Panc1 (cell line): ENCODE measurements at regions of chr10 and their contacts with region 1.

Region 1: DNA sequence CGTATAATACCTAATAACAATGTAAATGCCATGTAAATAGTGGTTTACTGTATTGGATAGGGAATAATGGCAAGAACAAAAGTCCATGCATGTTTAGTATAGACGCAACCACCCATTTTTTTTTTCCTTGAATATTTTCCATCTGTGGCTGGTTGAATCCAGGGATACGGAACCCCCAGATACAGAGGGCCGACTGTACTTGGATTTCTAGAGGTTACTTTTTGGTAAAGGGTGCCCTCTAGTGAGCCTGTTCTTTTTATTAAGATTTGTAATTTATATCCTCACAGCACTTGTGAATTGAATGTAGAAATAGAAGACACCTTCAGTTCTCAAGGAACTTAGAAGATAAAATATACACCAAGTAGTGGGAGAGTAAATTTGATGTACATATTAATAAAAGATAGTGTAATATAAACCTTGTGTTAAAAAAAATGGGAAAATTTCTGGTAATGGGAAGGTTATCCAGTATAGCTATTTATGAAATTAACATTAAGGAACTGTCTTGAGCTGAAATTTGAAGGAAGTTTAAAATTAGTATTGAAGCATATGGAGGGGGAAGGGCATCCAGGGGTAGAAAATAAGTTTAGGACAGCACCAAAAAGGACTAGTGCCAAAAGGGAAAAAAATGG is 32.0 kb downstream of the EXOC6 start:
- DNase-seq: no peak
- ATAC-seq: peak; percentile 76
- H3K4me3 ChIP-seq: no peak overlapping the region
- H3K27ac ChIP-seq: no peak overlapping the region
- H3K4me1 ChIP-seq: peaks cover 11% of the 10 kb centered on the region
- H3K27me3 ChIP-seq: no peaks in the 10 kb centered on the region
- CTCF ChIP-seq: peak; percentile 72; the same call in 1 of the 2 replicates

Region 2: GRCh38 chr10:93074147-93074596 is 193.8 kb after region 1 on chr10:
- CTCF ChIA-PET with region 1: no interaction called
- POLR2A ChIA-PET with region 1: no interaction called
- in situ Hi-C with region 1: no loop called
- intact Hi-C with region 1: loop called (anchors 10 kb)
- DNase-seq: no peak
- ATAC-seq: no peak; the same call in 1 of the 2 replicates
- H3K4me3 ChIP-seq: peak overlapping the region; percentile 42 to 62
- H3K27ac ChIP-seq: no peak overlapping the region
- H3K4me1 ChIP-seq: peaks cover 13% of the 10 kb centered on the region
- H3K27me3 ChIP-seq: peaks cover 26% of the 10 kb centered on the region
- CTCF ChIP-seq: peak; percentile 68

Region 3: DNA sequence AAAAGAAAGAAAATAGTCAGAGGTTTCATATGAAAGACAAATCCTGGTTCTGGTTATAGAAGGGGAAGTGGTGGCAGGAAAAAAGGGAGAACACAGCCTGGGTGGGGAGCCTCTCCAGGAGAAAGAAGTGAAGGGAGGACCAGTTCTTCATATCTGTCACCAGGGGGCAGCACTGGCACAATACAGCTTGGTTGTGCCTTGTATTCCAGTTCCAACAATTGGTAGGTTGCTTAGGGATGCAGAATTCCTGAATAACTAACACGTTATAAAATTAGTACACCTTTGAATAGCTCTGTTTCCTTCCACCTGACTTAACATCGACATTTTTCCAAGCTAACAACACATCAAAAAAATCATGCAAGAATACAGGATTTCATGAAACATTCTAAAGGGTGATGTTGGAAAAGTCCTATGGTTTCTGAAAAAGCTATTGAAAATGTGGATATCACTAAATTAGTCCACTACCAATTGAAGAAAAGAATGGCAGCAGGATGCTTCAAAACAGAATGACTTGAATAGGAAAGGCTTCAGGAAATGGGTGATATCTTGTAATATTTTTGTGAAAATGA is 246.2 kb after region 1 on chr10:
- CTCF ChIA-PET with region 1: no interaction called
- POLR2A ChIA-PET with region 1: no interaction called
- in situ Hi-C with region 1: no loop called
- intact Hi-C with region 1: no loop called
- DNase-seq: no peak
- ATAC-seq: no peak
- H3K4me3 ChIP-seq: no peak overlapping the region
- H3K27ac ChIP-seq: no peak overlapping the region
- H3K4me1 ChIP-seq: no peaks in the 10 kb centered on the region
- H3K27me3 ChIP-seq: 0 out of 2 replicates have a peak, but pooled peaks cover 2% of the 10 kb centered on the region
- CTCF ChIP-seq: peak; percentile 63